ENCODE measurements at regions of chr2 and their contacts with region 1.

Region 1: DNA sequence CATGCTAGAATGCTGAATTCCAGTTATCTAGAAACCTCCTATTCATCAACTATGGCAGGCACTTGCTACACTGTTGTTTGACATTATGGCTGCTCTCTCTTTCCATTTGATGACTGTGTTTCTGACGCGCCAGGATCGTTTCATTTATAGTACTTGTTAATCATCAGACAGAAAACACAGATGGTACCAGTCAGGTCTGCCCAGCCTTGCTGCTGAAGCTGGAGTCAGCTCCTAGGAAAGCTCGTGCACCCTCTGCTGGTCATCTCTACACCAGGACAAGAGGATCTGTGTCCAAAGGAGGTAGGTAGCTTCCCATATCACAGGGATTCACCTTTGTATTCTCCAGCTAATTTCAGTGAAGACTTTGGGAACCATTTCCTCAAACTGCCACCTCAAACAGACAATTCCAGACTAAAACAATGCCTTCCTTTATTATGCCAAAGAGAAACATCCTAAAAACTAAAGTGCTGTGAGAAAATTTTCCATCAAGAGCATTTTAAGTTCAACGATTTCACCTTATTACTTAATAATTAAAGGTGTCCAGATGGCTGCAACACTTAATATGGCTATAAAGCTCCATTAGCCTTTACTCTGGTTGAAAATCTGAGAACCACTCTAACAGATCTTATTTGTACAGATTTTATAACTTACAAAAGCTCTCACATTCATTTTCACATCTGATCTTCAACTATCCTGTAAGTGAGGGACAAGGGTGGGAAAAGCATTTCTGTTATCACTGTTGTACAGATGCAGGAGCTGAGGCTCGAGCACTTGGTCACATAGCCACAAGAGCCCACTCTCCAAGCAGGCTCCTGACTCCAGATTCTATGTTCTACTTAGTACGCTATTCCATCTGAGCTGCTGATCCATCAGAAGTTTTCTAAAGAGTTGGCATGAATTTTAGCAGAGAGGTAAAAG is 17.5 kb downstream of the METTL8 start:
- DNase-seq: peak; percentile 74 to 94
- ATAC-seq: peak; percentile 100
- H3K4me3 ChIP-seq: no peak overlapping the region
- H3K27ac ChIP-seq: peak overlapping the region in 1 of 2 experiments; percentile 44; a peak in 3 of 6 replicates
- H3K4me1 ChIP-seq: peaks cover 10% of the 10 kb centered on the region; the same call in 2 of the 3 replicates
- CTCF ChIP-seq: peak; percentile 93
- EP300 ChIP-seq: no peak
- POLR2A ChIP-seq: no peak
- RAD21 ChIP-seq: peak; percentile 91 to 93

Region 2: GRCh38 chr2:170610615-170611014 is 805.7 kb before region 1 on chr2:
- CTCF ChIA-PET with region 1: no interaction called
- POLR2A ChIA-PET with region 1: no interaction called
- DNase-seq: no peak
- ATAC-seq: no peak
- H3K4me3 ChIP-seq: no peak overlapping the region
- H3K27ac ChIP-seq: no peak overlapping the region
- H3K4me1 ChIP-seq: no peaks in the 10 kb centered on the region
- CTCF ChIP-seq: no peak
- EP300 ChIP-seq: no peak
- POLR2A ChIP-seq: no peak
- RAD21 ChIP-seq: no peak

Region 3: DNA sequence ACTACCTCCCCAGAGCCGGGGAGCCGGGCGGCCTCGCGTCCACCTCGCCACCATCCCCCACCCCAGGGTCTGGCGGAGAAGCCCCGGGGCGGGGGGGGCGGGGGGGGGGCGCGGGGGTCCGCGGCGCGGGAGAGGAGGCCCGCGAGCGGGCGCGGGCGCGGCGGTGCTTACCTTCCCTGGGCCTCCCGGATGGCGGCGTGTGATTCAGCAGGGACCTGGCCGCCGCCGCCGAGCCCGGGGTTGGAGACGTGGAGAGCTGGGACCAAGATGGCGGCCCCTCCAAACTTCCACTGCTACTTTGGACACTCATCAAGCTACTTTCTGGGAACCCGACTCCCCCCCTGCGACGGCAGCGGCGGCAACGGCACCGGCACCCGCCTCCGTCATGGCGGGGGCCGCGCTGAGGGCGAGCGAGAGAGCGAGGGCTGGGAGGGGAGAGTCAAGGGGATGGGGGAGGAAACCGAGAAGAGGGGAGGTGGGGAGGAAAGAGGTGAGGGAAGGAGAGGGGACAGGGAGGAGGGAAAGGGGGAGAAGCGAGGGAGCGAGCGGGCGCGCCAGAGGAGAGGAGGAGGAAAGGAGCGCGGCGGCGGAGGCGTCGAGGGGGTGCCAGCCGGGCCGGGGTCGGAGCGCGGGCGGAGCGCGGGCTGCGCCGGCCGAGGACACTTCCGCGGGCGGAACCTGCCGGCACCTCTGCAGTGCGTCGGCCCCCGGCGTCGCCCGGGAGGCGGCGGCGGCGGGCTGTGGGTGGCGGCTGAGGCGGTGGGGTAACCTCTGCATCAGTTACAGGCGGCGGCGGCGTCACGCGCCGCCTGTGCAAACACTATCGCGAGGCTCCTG is 255.9 kb before region 1 on chr2 and contains the start of gene TLK1:
- CTCF ChIA-PET with region 1: interaction called, 31 read pairs
- POLR2A ChIA-PET with region 1: interaction called, 12 read pairs
- DNase-seq: peak; percentile 30 to 74
- ATAC-seq: peak; percentile 81
- H3K4me3 ChIP-seq: peak within 1 kb of the TSS; percentile 91
- H3K27ac ChIP-seq: peak within 1 kb of the TSS; percentile 98 to 99
- H3K4me1 ChIP-seq: peaks cover 19% of the 10 kb centered on the region
- CTCF ChIP-seq: no peak
- EP300 ChIP-seq: no peak
- POLR2A ChIP-seq: peak; percentile 53
- RAD21 ChIP-seq: no peak; a peak in 1 of 5 replicates
- polyA plus RNA-seq, gene TLK1: 28.9 and 29.8 TPM in 2 replicates

Region 4: DNA sequence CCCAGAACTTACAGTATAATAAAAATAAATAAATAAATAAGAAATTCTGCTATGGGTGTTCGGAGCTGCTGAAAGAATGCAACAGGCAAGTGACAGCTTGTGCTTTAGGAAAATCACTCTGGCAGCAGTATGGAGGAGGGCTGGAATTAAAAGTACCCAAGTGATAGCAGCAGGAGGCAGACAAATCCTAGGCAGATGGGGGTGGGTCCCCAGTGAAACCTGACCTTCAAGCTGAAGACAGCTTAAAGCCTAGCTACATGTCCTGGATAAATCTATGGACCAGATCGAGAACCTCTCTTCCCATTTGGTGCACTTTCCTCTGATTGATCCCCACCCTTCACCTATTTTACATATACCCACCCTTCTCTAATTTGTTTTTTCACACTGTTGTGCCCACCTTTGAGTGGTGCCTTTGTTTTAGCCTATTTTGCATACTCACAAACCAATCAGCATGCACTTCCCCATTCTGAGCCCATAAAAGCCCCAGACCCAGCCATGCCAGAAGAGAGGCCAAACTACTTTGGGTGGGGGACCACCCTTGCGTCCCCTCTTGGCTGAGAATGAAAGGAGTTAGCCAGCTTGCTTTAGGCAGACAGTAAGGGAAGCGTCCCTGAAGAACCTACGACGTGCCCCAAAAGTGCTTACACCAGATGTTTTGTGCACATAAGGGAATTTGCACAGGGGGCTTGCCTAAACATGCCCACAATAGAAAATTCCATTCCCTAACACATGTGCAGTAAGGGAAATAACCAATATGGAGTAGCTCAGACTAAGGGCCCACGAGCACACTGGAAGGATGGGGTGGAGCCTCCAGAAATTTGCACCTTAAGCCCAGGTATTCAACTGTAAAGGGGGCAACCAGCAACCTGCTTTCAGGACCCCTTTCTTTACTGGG is 14.5 kb after region 1 on chr2:
- CTCF ChIA-PET with region 1: interaction called, 14 read pairs
- POLR2A ChIA-PET with region 1: interaction called, 9 read pairs
- DNase-seq: no peak
- ATAC-seq: no peak
- H3K4me3 ChIP-seq: no peak overlapping the region
- H3K27ac ChIP-seq: peak overlapping the region; percentile 15 to 96; a peak in 3 of 6 replicates
- H3K4me1 ChIP-seq: peaks cover 35% of the 10 kb centered on the region
- CTCF ChIP-seq: no peak
- EP300 ChIP-seq: no peak
- POLR2A ChIP-seq: no peak
- RAD21 ChIP-seq: no peak

Region 5: GRCh38 chr2:171858397-171858958 is 442.2 kb after region 1 on chr2:
- CTCF ChIA-PET with region 1: no interaction called
- POLR2A ChIA-PET with region 1: no interaction called
- DNase-seq: no peak
- ATAC-seq: no peak
- H3K4me3 ChIP-seq: no peak overlapping the region
- H3K27ac ChIP-seq: no peak overlapping the region
- H3K4me1 ChIP-seq: no peaks in the 10 kb centered on the region
- CTCF ChIP-seq: no peak
- EP300 ChIP-seq: no peak
- POLR2A ChIP-seq: no peak
- RAD21 ChIP-seq: no peak